ENCODE measurements at regions of chr7 and their contacts with region 1.

Region 1: DNA sequence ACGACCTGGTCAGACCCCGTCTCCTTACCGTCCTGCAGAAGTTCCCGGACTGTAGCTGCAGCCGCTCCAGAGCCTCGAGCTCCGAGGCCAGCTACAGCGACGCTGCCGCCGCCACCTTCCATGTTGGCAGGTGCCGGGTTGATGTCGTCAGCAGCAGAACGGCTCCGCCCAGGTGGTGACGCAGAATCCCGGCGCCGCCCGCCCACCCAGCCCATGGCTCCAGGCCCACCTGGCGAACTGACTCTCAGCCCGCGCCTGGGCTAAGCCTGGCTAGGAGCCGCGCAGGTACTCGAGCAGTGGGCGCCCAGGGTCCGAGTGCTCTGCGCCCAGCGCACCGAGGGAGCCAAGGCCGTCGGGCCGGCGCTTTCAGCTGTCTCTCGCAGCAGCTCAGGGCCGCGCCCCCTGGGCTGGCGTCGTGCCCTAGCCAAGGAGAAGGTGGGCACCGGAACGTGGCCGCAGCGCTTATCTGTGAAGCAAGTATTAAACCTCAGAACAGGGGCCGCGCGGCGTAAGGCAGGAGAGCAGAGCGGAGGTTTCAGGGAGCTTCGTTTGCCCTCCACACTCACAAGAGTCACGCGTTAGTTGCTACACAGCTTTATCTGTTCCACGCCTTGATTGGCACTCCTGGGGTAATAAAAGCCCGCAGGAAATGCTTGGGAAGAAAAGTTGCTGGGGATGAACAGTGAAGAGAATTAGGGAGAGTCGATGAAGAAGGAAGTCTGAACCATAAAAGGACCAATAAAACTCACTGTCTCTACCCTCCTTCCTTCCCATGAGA is at the starts of genes COG5 and DUS4L:
- DNase-seq: peak; percentile 95
- H3K4me3 Mint-ChIP-seq: peak within 1 kb of the TSS; percentile 85
- H3K27ac Mint-ChIP-seq: peak within 1 kb of the TSS; percentile 85
- H3K4me1 Mint-ChIP-seq: peaks cover 50% of the 10 kb centered on the region
- H3K27me3 Mint-ChIP-seq: no peaks in the 10 kb centered on the region
- total RNA-seq, gene COG5: 40.9 and 43.3 TPM in 2 replicates
- total RNA-seq, gene DUS4L: 12.9 and 14.9 TPM in 2 replicates

Region 2: GRCh38 chr7:107579885-107580715 is 16.1 kb after region 1 on chr7 and contains the start of gene BCAP29:
- intact Hi-C with region 1: loop called (anchors 1 kb)
- DNase-seq: peak; percentile 92
- H3K4me3 Mint-ChIP-seq: peak within 1 kb of the TSS; percentile 91
- H3K27ac Mint-ChIP-seq: peak within 1 kb of the TSS; percentile 91
- H3K4me1 Mint-ChIP-seq: peaks cover 25% of the 10 kb centered on the region
- H3K27me3 Mint-ChIP-seq: no peaks in the 10 kb centered on the region
- total RNA-seq, gene BCAP29: 43.6 and 52.0 TPM in 2 replicates

Region 3: GRCh38 chr7:107768272-107768671 is 204.3 kb after region 1 on chr7:
- intact Hi-C with region 1: no loop called
- DNase-seq: no peak
- H3K4me3 Mint-ChIP-seq: no peak overlapping the region
- H3K27ac Mint-ChIP-seq: no peak overlapping the region
- H3K4me1 Mint-ChIP-seq: peaks cover 23% of the 10 kb centered on the region
- H3K27me3 Mint-ChIP-seq: no peaks in the 10 kb centered on the region

Region 4: GRCh38 chr7:107879400-107880035 is 315.6 kb after region 1 on chr7:
- intact Hi-C with region 1: loop called (anchors 5 kb)
- DNase-seq: peak; percentile 79
- H3K4me3 Mint-ChIP-seq: no peak overlapping the region
- H3K27ac Mint-ChIP-seq: no peak overlapping the region
- H3K4me1 Mint-ChIP-seq: peaks cover 15% of the 10 kb centered on the region
- H3K27me3 Mint-ChIP-seq: peaks cover 21% of the 10 kb centered on the region

Region 5: GRCh38 chr7:107890962-107891635 is 327.1 kb after region 1 on chr7 and contains the start of gene DLD:
- intact Hi-C with region 1: loop called (anchors 5 kb)
- DNase-seq: peak; percentile 99
- H3K4me3 Mint-ChIP-seq: peak within 1 kb of the TSS; percentile 100
- H3K27ac Mint-ChIP-seq: peak within 1 kb of the TSS; percentile 99
- H3K4me1 Mint-ChIP-seq: peaks cover 41% of the 10 kb centered on the region
- H3K27me3 Mint-ChIP-seq: peaks cover 2% of the 10 kb centered on the region
- total RNA-seq, gene DLD: 113 and 119 TPM in 2 replicates

Region 6: GRCh38 chr7:108569381-108570145 is 1005.6 kb after region 1 on chr7 and contains the starts of genes DNAJB9 and THAP5:
- intact Hi-C with region 1: loop called (anchors 2 kb)
- DNase-seq: peak; percentile 100
- H3K4me3 Mint-ChIP-seq: peak within 1 kb of the TSS; percentile 100
- H3K27ac Mint-ChIP-seq: peak within 1 kb of the TSS; percentile 100
- H3K4me1 Mint-ChIP-seq: peaks cover 39% of the 10 kb centered on the region
- H3K27me3 Mint-ChIP-seq: no peaks in the 10 kb centered on the region
- total RNA-seq, gene DNAJB9: 11.5 and 12.7 TPM in 2 replicates
- total RNA-seq, gene THAP5: 35.6 TPM in 2 replicates